Heart left ventricle (tissue), 16 donors: ENCODE measurements at regions of chr10 and their contacts with region 1.

Region 1: GRCh38 chr10:97759158-97759887 is 12.5 kb downstream of the SFRP5 start:
- DNase-seq: peak; percentile 41 to 72 (median 54)
- ATAC-seq: peak; percentile 49 to 85 (median 82)
- H3K4me3 ChIP-seq: no peak overlapping the region
- H3K27ac ChIP-seq: peak overlapping the region in 1 of 12 donors; percentile 38
- H3K4me1 ChIP-seq: peaks cover 0 to 6% (median 0%) of the 10 kb centered on the region in 12 donors
- H3K27me3 ChIP-seq: no peaks in the 10 kb centered on the region
- CTCF ChIP-seq: peak; percentile 78 to 88 (median 84)
- POLR2A ChIP-seq: no peak

Region 2: DNA sequence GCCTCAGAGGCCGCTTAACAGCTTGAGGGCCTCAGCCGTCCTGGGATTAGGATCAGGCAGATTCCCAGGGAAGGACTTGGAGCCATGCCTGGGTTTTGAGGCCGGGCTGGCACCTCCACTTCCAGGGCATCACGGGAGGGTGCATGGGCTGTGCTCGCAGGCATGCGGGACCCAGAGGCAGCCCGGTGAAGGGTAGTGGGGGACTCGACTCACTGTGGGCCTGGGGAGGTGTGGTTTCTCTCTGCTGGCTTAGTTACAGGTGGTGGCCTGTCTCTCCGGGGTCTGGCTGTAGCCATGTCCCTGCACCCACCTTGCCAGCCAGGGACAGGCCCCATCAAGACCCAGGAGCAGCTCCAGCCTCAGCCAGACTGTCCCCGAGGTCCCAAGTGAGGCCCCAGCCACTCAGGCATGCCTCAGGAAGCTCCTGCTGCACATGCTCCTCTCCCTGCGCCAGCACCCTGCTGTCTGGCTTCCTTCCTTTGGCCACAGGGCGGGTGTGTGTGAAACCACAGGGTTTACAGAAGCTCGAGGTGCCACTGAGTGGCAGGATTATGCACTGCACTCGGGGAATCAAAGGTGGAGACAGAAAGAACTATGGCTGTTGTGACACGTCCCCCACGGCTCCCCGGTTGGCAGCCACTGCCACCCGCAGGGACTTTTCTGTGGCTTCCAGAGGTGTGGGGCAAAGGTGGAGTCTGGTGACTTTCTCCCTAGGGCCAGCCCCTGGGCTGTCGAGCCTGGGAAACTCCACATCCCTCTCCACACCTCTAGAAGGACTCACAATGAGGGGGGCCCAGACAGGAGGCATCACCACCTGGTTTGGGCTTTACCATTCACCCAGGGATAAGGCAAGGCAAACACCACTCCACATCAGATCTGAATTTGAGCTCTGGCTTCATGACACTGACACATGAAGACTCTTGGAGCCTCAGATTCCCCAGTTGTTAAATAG is 110.0 kb after region 1 on chr10:
- intact Hi-C with region 1: loop called (anchors 1 to 10 kb)
- DNase-seq: peak; percentile 79 to 89 (median 81)
- ATAC-seq: peak; percentile 92 to 98 (median 96)
- H3K4me3 ChIP-seq: no peak overlapping the region
- H3K27ac ChIP-seq: no peak overlapping the region
- H3K4me1 ChIP-seq: peaks cover 0 to 15% (median 6%) of the 10 kb centered on the region in 12 donors
- H3K27me3 ChIP-seq: peaks cover 0 to 13% (median 0%) of the 10 kb centered on the region in 9 donors
- CTCF ChIP-seq: peak; percentile 57 to 78 (median 69)
- POLR2A ChIP-seq: no peak

Region 3: GRCh38 chr10:98028168-98028770 is 268.9 kb after region 1 on chr10:
- intact Hi-C with region 1: loop called in 1 of 10 experiments (anchors 10 kb)
- DNase-seq: peak in 4 of 5 donors; percentile 44 to 49 (median 46)
- ATAC-seq: peak; percentile 38 to 64 (median 57)
- H3K4me3 ChIP-seq: no peak overlapping the region
- H3K27ac ChIP-seq: no peak overlapping the region
- H3K4me1 ChIP-seq: peaks cover 0 to 25% (median 12%) of the 10 kb centered on the region in 12 donors
- H3K27me3 ChIP-seq: peaks cover 11 to 69% (median 31%) of the 10 kb centered on the region in 9 donors
- CTCF ChIP-seq: peak; percentile 60 to 87 (median 75)
- POLR2A ChIP-seq: no peak

Region 4: DNA sequence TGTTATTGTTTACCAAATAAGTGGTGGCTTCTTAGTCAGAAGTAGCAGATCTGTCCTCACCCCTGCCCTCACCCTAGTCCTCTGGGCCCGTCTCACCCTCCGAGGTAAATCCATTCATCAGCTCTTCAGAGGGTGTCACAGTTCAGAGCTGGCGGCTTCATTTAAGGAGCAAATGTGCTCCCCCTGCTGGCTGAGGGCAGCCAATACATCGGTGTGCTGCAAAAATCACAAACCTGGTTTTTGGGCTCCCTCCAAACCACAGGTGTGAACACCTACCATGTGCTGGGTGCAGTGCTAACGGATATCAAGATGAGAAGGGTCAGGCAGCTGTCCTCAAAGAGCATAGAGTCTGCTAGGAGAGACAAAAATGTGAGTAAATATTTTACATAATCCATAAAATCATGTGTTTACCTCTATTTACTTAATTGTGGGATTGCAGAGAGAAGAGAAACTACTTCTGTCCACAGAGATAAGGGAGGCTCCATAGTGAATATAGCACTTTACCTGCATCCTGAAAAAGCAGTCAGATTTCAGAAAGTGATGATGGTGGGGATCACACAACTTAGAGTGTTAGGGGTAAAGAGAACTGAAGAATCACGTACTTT is 286.6 kb after region 1 on chr10:
- intact Hi-C with region 1: loop called in 5 of 10 experiments (anchors 5 to 10 kb)
- DNase-seq: peak in 4 of 5 donors; percentile 45 to 57 (median 49)
- ATAC-seq: peak in 3 of 4 donors; percentile 40 to 65 (median 45)
- H3K4me3 ChIP-seq: no peak overlapping the region
- H3K27ac ChIP-seq: no peak overlapping the region
- H3K4me1 ChIP-seq: peaks cover 0 to 24% (median 5%) of the 10 kb centered on the region in 12 donors
- H3K27me3 ChIP-seq: peaks cover 0 to 12% (median 0%) of the 10 kb centered on the region in 9 donors
- CTCF ChIP-seq: peak; percentile 75 to 93 (median 84)
- POLR2A ChIP-seq: no peak

Region 5: GRCh38 chr10:98608411-98608810 is 849.1 kb after region 1 on chr10:
- intact Hi-C with region 1: no loop called
- DNase-seq: peak in 2 of 5 donors; percentile 27 to 48
- ATAC-seq: peak in 2 of 4 donors; percentile 56 to 83
- H3K4me3 ChIP-seq: no peak overlapping the region
- H3K27ac ChIP-seq: peak overlapping the region in 1 of 12 donors; percentile 53
- H3K4me1 ChIP-seq: peaks cover 0 to 7% (median 0%) of the 10 kb centered on the region in 12 donors
- H3K27me3 ChIP-seq: peaks cover 0 to 15% (median 0%) of the 10 kb centered on the region in 9 donors
- CTCF ChIP-seq: no peak
- POLR2A ChIP-seq: no peak